Naive thymus-derived CD4-positive, alpha-beta T cell (primary cell): ENCODE measurements at regions of chr19 and their contacts with region 1.

Region 1: DNA sequence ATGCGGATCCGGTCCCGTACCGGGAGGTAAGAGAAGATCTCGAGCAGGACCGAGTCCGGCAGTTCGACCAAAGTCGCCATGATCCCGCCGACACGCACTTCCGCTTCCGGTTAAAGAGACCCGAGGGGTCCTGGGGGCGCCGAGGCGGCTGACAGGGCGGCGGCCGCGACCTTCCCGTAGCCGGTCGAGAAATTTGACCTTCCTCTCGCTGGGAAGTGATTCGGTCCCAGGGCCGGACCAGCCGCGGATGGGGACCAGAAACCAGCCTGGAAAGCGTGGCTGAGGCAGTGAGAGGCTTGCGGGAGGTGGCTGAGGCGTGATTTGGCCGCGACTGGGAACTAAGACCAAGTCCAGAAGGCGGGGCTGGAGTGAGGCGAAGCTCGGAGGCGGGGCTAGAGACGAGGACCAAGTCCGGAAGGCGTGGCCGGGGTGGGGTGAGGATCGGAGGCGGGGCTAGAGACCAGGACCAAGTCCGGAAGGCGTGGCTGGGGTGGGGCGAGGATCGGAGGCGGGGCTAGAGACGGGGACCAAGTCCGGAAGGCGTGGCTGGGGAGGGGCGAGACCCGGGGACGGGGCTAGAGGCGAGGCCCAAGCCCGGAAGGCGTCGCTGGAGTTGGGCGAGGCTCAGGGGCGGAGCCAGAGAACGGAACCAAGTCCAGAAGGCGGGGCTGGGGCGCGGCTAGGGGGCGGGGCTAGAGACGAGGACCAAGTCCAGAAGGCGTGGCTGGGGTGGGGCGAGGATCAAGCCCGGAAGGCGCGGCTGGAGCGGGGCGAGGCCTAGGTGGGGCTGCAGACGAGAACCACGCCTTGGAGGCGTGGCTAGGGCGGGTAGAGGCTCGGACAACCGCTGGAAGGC is at the start of gene FBXL12:
- DNase-seq: peak; percentile 99 to 100 (median 100)
- ATAC-seq: peak; percentile 93
- H3K4me3 ChIP-seq: peak within 1 kb of the TSS; percentile 100
- H3K4me3 Mint-ChIP-seq: peak within 1 kb of the TSS; percentile 81 to 96 (median 90)
- H3K27ac ChIP-seq: peak within 1 kb of the TSS; percentile 99
- H3K27ac Mint-ChIP-seq: peak within 1 kb of the TSS; percentile 78 to 97 (median 90)
- H3K4me1 ChIP-seq: peaks cover 9 to 14% of the 10 kb centered on the region in 2 donors
- H3K4me1 Mint-ChIP-seq: peaks cover 19 to 43% (median 30%) of the 10 kb centered on the region in 7 donors
- H3K27me3 ChIP-seq: no peaks in the 10 kb centered on the region
- H3K27me3 Mint-ChIP-seq: no peaks in the 10 kb centered on the region
- total RNA-seq, gene FBXL12: 16.8 to 36.2 (median 34.0) TPM

Region 2: GRCh38 chr19:8832132-8833021 is 986.6 kb before region 1 on chr19 and contains the starts of genes MBD3L1 and ZNF558:
- CTCF ChIA-PET with region 1: no interaction called
- POLR2A ChIA-PET with region 1: no interaction called
- intact Hi-C with region 1: loop called (anchors 1 to 5 kb)
- DNase-seq: peak; percentile 99 to 100 (median 99)
- ATAC-seq: peak; percentile 92
- H3K4me3 ChIP-seq: peak within 1 kb of the TSS; percentile 79
- H3K4me3 Mint-ChIP-seq: peak within 1 kb of the TSS; percentile 86 to 98 (median 90)
- H3K27ac ChIP-seq: peak within 1 kb of the TSS; percentile 93
- H3K27ac Mint-ChIP-seq: peak within 1 kb of the TSS; percentile 93 to 99 (median 96)
- H3K4me1 ChIP-seq: peaks cover 9 to 11% of the 10 kb centered on the region in 2 donors
- H3K4me1 Mint-ChIP-seq: peaks cover 6 to 38% (median 24%) of the 10 kb centered on the region in 7 donors
- H3K27me3 ChIP-seq: no peaks in the 10 kb centered on the region
- H3K27me3 Mint-ChIP-seq: peaks cover 0 to 16% (median 0%) of the 10 kb centered on the region in 5 donors
- total RNA-seq, gene MBD3L1: not detected
- total RNA-seq, gene ZNF558: 18.7 to 44.9 (median 26.3) TPM

Region 3: GRCh38 chr19:9584073-9584833 is 234.7 kb before region 1 on chr19 and contains the start of gene ZNF121:
- CTCF ChIA-PET with region 1: no interaction called
- POLR2A ChIA-PET with region 1: no interaction called
- intact Hi-C with region 1: loop called in 1 of 2 experiments (anchors 1 kb)
- DNase-seq: peak; percentile 61 to 82 (median 74)
- ATAC-seq: peak; percentile 87
- H3K4me3 ChIP-seq: peak within 1 kb of the TSS; percentile 98
- H3K4me3 Mint-ChIP-seq: peak within 1 kb of the TSS; percentile 91 to 99 (median 96)
- H3K27ac ChIP-seq: peak within 1 kb of the TSS; percentile 97
- H3K27ac Mint-ChIP-seq: peak within 1 kb of the TSS; percentile 94 to 99 (median 95)
- H3K4me1 ChIP-seq: peaks cover 7 to 15% of the 10 kb centered on the region in 2 donors
- H3K4me1 Mint-ChIP-seq: peaks cover 21 to 54% (median 34%) of the 10 kb centered on the region in 7 donors
- H3K27me3 ChIP-seq: no peaks in the 10 kb centered on the region
- H3K27me3 Mint-ChIP-seq: peaks cover 0 to 5% (median 4%) of the 10 kb centered on the region in 5 donors
- total RNA-seq, gene ZNF121: 28.3 to 49.4 (median 47.0) TPM

Region 4: GRCh38 chr19:9785367-9786331 is 33.3 kb before region 1 on chr19:
- CTCF ChIA-PET with region 1: no interaction called
- POLR2A ChIA-PET with region 1: no interaction called
- intact Hi-C with region 1: loop called (anchors 1 kb)
- DNase-seq: peak; percentile 81 to 97 (median 92)
- ATAC-seq: peak; percentile 92
- H3K4me3 ChIP-seq: peak overlapping the region; percentile 86
- H3K4me3 Mint-ChIP-seq: peak overlapping the region; percentile 73 to 95 (median 88)
- H3K27ac ChIP-seq: peak overlapping the region; percentile 80
- H3K27ac Mint-ChIP-seq: peak overlapping the region; percentile 83 to 99 (median 94)
- H3K4me1 ChIP-seq: peaks cover 5 to 9% of the 10 kb centered on the region in 2 donors
- H3K4me1 Mint-ChIP-seq: peaks cover 10 to 37% (median 27%) of the 10 kb centered on the region in 7 donors
- H3K27me3 ChIP-seq: no peaks in the 10 kb centered on the region
- H3K27me3 Mint-ChIP-seq: no peaks in the 10 kb centered on the region

Region 5: DNA sequence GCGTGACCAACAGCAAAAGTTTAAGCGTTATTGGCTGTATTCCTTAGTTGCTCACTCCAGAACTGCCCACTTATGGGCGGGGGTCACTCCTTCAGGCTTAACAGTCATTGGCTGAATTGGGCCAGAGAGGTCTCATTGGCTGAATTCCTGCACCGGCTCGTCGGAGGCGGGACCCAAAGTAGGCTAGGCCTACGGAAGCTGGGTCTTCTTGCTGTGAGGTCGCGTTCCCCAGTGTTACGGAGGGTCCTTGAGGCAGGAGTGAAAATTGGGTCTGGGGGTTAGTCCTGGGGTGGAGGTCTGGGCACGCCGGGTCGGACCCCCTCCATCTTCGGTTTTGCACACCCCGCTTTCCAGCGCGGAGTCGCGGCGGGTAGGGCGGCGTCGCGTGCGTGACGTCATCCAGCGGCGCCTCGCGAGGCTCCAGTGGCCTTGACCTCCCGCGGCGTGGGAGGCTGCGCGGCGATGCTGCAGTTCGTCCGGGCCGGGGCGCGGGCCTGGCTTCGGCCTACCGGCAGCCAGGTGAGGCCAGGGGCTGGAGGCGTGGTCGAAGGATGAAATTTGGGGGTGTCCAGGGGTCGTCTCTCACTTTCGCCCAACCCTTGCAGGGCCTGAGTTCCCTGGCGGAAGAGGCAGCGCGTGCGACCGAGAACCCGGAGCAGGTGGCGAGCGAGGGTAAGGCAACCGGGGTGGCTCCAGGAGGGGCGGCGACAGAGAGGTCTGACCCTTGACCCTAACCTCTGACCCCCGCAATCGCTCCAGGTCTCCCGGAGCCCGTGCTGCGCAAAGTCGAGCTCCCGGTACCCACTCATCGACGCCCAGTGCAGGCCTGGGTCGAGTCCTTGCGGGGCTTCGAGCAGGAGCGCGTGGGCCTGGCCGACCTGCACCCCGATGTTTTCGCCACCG is 433.1 kb after region 1 on chr19 and contains the start of gene MRPL4:
- CTCF ChIA-PET with region 1: no interaction called
- POLR2A ChIA-PET with region 1: no interaction called
- intact Hi-C with region 1: loop called (anchors 2 to 10 kb)
- DNase-seq: peak; percentile 82 to 98 (median 96)
- ATAC-seq: peak; percentile 98
- H3K4me3 ChIP-seq: peak within 1 kb of the TSS; percentile 90
- H3K4me3 Mint-ChIP-seq: peak within 1 kb of the TSS; percentile 93 to 100 (median 98)
- H3K27ac ChIP-seq: peak within 1 kb of the TSS; percentile 78
- H3K27ac Mint-ChIP-seq: peak within 1 kb of the TSS; percentile 92 to 99 (median 97)
- H3K4me1 ChIP-seq: peaks cover 6 to 12% of the 10 kb centered on the region in 2 donors
- H3K4me1 Mint-ChIP-seq: peaks cover 6 to 33% (median 24%) of the 10 kb centered on the region in 7 donors
- H3K27me3 ChIP-seq: no peaks in the 10 kb centered on the region
- H3K27me3 Mint-ChIP-seq: no peaks in the 10 kb centered on the region
- total RNA-seq, gene MRPL4: 36.8 to 70.5 (median 43.0) TPM

Region 6: DNA sequence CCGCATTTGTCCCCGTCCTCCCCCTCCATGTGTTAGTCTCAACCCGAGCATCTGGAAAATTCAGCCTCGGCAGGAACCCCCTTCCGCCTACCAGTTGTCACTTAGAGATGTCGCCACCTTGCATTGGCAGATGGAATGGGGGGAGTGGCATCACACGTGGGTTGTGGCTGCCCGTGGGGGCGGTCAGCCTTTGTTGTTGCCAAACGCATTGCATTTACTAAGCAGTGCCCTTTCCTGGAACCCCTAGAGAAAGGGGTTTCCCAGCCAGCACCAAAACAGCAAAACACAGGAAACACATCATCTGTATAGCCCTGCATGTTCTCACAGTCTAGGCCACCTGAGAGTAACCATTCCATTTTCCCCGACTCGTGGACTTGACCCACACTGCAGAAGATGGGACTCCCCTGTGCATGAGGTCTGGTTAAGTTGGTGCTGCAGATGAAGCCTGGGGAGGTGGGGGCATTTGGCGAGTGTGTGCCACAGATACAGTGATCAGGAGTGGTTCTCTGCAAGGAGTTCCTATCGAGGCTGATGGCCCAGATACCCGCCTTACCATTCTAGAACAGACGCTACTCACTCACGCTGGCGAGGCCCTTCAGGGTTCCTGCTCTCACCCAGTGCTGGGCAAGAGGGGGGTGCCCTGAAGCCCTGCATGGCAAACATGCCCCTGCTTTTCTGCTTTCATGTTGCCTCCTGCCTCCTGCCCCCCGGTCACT is 978.7 kb after region 1 on chr19:
- CTCF ChIA-PET with region 1: no interaction called
- POLR2A ChIA-PET with region 1: no interaction called
- intact Hi-C with region 1: no loop called
- DNase-seq: peak; percentile 27 to 89 (median 64)
- ATAC-seq: peak; percentile 90
- H3K4me3 ChIP-seq: peak overlapping the region; percentile 39
- H3K4me3 Mint-ChIP-seq: peak overlapping the region; percentile 56 to 82 (median 74)
- H3K27ac ChIP-seq: peak overlapping the region; percentile 80
- H3K27ac Mint-ChIP-seq: peak overlapping the region; percentile 93 to 97 (median 94)
- H3K4me1 ChIP-seq: peaks cover 25 to 39% of the 10 kb centered on the region in 2 donors
- H3K4me1 Mint-ChIP-seq: peaks cover 8 to 51% (median 16%) of the 10 kb centered on the region in 7 donors
- H3K27me3 ChIP-seq: no peaks in the 10 kb centered on the region
- H3K27me3 Mint-ChIP-seq: no peaks in the 10 kb centered on the region

Region 7: GRCh38 chr19:10870955-10871603 is 1052.1 kb after region 1 on chr19 and contains the start of gene CARM1:
- CTCF ChIA-PET with region 1: no interaction called
- POLR2A ChIA-PET with region 1: no interaction called
- intact Hi-C with region 1: loop called (anchors 1 to 2 kb)
- DNase-seq: peak; percentile 99 to 100 (median 99)
- ATAC-seq: peak; percentile 92
- H3K4me3 ChIP-seq: peak within 1 kb of the TSS; percentile 67
- H3K4me3 Mint-ChIP-seq: peak within 1 kb of the TSS; percentile 79 to 91 (median 86)
- H3K27ac ChIP-seq: peak within 1 kb of the TSS; percentile 74
- H3K27ac Mint-ChIP-seq: peak within 1 kb of the TSS; percentile 74 to 96 (median 88)
- H3K4me1 ChIP-seq: peaks cover 10 to 14% of the 10 kb centered on the region in 2 donors
- H3K4me1 Mint-ChIP-seq: peaks cover 5 to 33% (median 25%) of the 10 kb centered on the region in 7 donors
- H3K27me3 ChIP-seq: no peaks in the 10 kb centered on the region
- H3K27me3 Mint-ChIP-seq: no peaks in the 10 kb centered on the region
- total RNA-seq, gene CARM1: 21.3 to 43.1 (median 27.2) TPM